HEK293 (cell line): ENCODE measurements at regions of chr5 and their contacts with region 1.

Region 1: DNA sequence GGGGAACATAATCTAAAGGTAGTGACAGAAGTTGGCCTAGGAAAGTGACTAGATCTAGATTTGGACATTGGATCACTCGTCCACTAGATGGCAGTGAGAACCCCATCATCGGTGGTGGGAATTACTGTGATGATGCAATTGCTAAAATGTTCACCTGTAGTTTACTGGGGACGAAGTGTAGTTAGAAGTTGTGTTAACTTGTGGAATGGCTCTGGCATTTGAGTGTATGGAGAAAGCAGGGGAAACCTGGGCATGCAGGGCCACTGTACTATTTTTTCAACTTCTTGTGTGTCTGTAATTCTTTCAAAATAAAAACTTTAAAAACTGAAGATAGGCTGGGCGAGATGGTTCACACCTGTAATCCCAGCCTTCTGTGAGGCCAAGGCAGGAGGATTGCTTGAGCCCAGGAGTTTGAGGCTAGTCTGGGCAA is 75.5 kb downstream of the PHAX start:
- H3K4me3 ChIP-seq: no peak overlapping the region
- H3K27ac ChIP-seq: no peak overlapping the region
- H3K4me1 ChIP-seq: no peaks in the 10 kb centered on the region
- CTCF ChIP-seq: peak; percentile 83

Region 2: GRCh38 chr5:126801992-126802294 is 125.7 kb after region 1 on chr5:
- CTCF ChIA-PET with region 1: interaction called, 10 read pairs
- POLR2A ChIA-PET with region 1: interaction called, 4 read pairs
- H3K4me3 ChIP-seq: no peak overlapping the region
- H3K27ac ChIP-seq: no peak overlapping the region
- H3K4me1 ChIP-seq: peaks cover 5% of the 10 kb centered on the region
- CTCF ChIP-seq: peak; percentile 27; the same call in 1 of the 2 replicates

Region 3: DNA sequence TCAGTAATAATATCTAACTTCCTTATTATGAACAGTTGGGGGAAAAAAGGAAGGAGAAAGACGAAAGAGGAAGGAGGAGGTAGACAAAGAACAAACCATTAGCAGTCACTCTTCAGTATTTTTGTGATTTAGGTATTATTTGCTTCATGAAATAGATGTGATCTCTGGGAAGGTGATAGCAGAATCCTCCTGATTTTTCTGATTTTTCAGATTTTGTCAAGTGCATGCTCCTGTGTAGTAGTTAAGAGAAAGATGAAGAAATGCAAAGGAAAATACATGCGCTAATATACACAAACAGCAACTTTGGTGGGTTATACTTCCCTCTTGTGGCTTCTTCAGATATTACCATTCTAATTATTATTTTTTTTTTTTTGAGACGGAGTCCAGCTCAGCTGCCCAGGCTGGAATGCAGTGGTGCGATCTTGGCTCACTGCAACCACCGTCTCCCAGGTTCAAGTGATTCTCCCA is 132.3 kb after region 1 on chr5:
- CTCF ChIA-PET with region 1: interaction called, 13 read pairs
- POLR2A ChIA-PET with region 1: no interaction called
- H3K4me3 ChIP-seq: no peak overlapping the region
- H3K27ac ChIP-seq: no peak overlapping the region
- H3K4me1 ChIP-seq: no peaks in the 10 kb centered on the region
- CTCF ChIP-seq: 0 out of 2 replicates have a peak, but pooled peaks have one; percentile 22